IMR-90 (cell line): ENCODE measurements at regions of chr9 and their contacts with region 1.

Region 1: GRCh38 chr9:88173378-88173999 is 35.2 kb upstream of the SPATA31C2 start:
- DNase-seq: peak; percentile 73
- ATAC-seq: peak; percentile 65; the same call in 1 of the 2 replicates
- H3K4me3 ChIP-seq: no peak overlapping the region
- H3K27ac ChIP-seq: no peak overlapping the region
- H3K4me1 ChIP-seq: no peaks in the 10 kb centered on the region
- H3K27me3 ChIP-seq: peaks cover 7% of the 10 kb centered on the region; the same call in 1 of the 2 replicates
- CTCF ChIP-seq: peak; percentile 99
- POLR2A ChIP-seq: no peak
- RAD21 ChIP-seq: peak; percentile 77

Region 2: DNA sequence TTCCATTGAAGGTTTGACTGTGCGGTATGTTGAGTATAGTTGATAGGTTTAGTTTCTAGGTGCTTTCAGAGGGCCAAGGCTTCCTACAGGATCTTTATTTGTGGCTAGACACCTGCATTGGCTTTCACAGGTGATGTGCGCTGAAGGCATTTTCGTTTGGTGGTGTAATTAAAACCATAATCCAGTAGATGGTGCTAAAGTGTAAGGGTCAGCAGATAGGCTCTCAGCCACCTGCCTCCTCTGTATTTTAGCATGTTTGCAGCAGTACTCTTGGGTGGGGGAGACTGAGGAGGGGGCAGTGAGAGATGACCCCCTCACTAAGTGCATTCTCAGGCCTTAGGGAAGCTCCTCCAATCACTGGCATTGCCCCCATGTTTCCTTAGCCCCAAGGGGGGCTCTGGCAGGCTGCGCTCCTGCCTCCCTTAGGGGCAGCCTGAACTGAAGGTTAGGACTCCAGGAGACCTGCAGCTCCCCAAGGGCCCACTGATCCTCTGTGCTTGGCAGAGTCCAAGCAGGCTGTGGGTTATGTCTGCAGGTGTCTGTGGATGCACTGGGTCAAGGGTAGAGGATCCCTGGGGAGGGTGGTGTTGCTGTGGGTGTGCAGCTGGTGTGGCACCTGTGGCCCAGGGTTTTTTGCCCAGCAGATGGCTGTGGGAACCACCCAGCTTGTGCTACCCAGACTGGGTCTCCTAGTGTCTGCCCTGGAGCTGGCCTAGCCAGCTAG is 222.6 kb before region 1 on chr9:
- CTCF ChIA-PET with region 1: no interaction called
- POLR2A ChIA-PET with region 1: no interaction called
- dilution Hi-C with region 1: no loop called
- in situ Hi-C with region 1: no loop called
- intact Hi-C with region 1: loop called (anchors 5 kb)
- DNase-seq: peak; percentile 34
- ATAC-seq: peak; percentile 77
- H3K4me3 ChIP-seq: no peak overlapping the region
- H3K27ac ChIP-seq: no peak overlapping the region
- H3K4me1 ChIP-seq: no peaks in the 10 kb centered on the region
- H3K27me3 ChIP-seq: peaks cover 5% of the 10 kb centered on the region
- CTCF ChIP-seq: peak; percentile 61
- POLR2A ChIP-seq: no peak
- RAD21 ChIP-seq: peak; percentile 82

Region 3: GRCh38 chr9:88362681-88363080 is 189.2 kb after region 1 on chr9:
- CTCF ChIA-PET with region 1: no interaction called
- POLR2A ChIA-PET with region 1: no interaction called
- dilution Hi-C with region 1: no loop called
- in situ Hi-C with region 1: loop called (anchors 10 kb)
- intact Hi-C with region 1: no loop called
- DNase-seq: no peak
- ATAC-seq: no peak
- H3K4me3 ChIP-seq: no peak overlapping the region
- H3K27ac ChIP-seq: no peak overlapping the region
- H3K4me1 ChIP-seq: no peaks in the 10 kb centered on the region
- H3K27me3 ChIP-seq: peaks cover 1% of the 10 kb centered on the region; the same call in 1 of the 2 replicates
- CTCF ChIP-seq: no peak
- POLR2A ChIP-seq: no peak
- RAD21 ChIP-seq: no peak